Heart right ventricle (tissue), 16 donors: ENCODE measurements at regions of chr2 and their contacts with region 1.

Region 1: DNA sequence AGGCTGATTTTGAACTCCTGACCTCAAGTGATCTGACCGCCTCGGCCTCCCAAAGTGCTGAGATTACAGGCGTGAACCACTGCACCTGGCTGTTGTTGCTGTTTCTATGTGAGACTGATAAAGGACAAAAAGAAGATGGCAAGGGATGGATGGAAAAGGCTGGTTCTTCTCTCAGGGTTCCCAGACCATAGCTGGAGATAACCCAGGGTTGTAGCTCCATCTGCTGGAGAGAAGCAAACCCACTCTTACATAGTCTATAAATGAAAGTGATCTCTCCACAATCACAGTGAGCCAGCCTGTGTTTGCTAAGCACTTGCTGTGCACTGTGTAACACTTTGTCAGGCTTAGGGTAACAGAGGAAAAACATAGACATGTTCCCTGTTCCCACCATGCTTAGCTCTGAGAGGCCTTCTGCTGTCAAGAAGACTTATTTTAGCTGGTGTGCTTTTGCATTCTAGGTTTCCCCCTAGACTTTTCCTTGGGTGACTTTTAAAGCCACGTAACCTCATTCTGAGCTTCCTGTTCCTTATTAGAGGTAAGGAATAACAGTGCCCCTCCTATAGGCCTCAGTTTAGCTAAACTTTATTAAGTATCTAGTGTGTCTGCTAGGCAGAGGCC is 49.7 kb downstream of the LIMS1 start:
- DNase-seq: peak in 1 of 2 donors; percentile 85
- ATAC-seq: peak; percentile 71 to 81 (median 76)
- H3K4me3 ChIP-seq: no peak overlapping the region
- H3K27ac ChIP-seq: peak overlapping the region in 3 of 10 donors; percentile 29 to 52 (median 29)
- H3K4me1 ChIP-seq: peaks cover 13 to 76% (median 55%) of the 10 kb centered on the region in 9 donors
- H3K27me3 ChIP-seq: no peaks in the 10 kb centered on the region
- CTCF ChIP-seq: peak; percentile 53 to 88 (median 84)

Region 2: DNA sequence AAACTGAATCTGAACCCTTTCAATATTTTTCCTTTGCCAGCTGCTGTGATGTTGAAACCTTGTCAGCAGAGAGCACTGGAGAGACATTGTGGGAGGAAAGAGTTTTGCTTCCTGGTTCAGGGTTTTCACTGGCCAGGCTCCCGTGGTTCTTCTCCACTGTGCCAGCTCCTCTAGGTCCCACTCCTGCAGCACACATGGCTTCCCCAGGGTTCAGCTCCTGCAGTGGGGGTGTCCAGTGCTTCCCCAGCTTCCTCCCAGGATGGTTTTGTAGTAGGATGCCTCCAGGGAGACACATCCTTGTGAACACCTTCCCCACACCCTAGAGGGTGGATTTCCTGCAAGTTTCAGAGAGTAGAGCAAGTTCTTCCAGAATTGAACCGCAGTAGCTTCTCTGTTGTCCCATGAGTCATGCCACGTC is 368.2 kb before region 1 on chr2:
- intact Hi-C with region 1: loop called in 3 of 10 experiments (anchors 2 to 10 kb)
- DNase-seq: no peak
- ATAC-seq: peak in 4 of 8 donors; percentile 34 to 75 (median 61)
- H3K4me3 ChIP-seq: no peak overlapping the region
- H3K27ac ChIP-seq: no peak overlapping the region
- H3K4me1 ChIP-seq: peaks cover 0 to 7% (median 0%) of the 10 kb centered on the region in 9 donors
- H3K27me3 ChIP-seq: no peaks in the 10 kb centered on the region
- CTCF ChIP-seq: peak in 5 of 9 donors; percentile 27 to 46 (median 37)

Region 3: GRCh38 chr2:108351889-108352288 is 232.1 kb before region 1 on chr2:
- intact Hi-C with region 1: loop called in 8 of 10 experiments (anchors 2 to 10 kb)
- DNase-seq: no peak
- ATAC-seq: no peak
- H3K4me3 ChIP-seq: no peak overlapping the region
- H3K27ac ChIP-seq: no peak overlapping the region
- H3K4me1 ChIP-seq: no peaks in the 10 kb centered on the region
- H3K27me3 ChIP-seq: peaks cover 0 to 13% (median 0%) of the 10 kb centered on the region in 7 donors
- CTCF ChIP-seq: no peak

Region 4: DNA sequence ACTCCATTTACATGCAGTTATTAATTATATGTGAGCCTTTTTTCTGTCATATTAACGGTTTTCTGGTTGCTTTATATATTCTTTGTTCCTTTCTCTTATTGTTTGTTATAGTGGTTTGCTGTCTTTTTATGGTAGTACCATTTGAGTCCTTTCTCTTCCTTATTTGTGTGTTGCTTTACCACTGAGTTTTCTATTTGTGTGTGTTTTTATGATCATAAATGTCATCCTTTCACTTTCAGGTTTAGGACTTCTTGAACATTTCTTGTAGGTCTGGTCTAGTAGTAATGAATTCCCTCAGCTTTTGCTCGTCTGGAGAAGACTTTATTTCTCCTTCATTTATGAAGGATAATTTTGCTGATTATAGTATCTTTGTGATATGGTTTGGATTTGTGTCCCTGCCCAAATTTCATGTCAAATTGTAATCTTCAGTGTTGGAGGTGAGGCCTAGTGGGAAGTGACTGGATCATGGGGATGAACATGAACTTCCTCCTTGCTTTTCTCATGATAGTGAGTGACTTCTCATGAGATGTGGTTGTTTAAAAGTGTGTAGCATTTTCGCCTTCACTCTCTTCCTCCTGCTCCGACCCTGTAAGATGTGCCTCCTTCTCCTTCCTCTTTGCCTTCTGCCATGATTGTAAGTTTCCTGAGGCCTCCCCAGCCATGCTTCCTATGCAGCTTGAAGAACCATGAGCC is 123.5 kb before region 1 on chr2:
- intact Hi-C with region 1: loop called in 3 of 10 experiments (anchors 10 kb)
- DNase-seq: no peak
- ATAC-seq: no peak
- H3K4me3 ChIP-seq: no peak overlapping the region
- H3K27ac ChIP-seq: no peak overlapping the region
- H3K4me1 ChIP-seq: peaks cover 0 to 5% (median 0%) of the 10 kb centered on the region in 9 donors
- H3K27me3 ChIP-seq: no peaks in the 10 kb centered on the region
- CTCF ChIP-seq: no peak

Region 5: GRCh38 chr2:108533832-108534583 is 50.0 kb before region 1 on chr2 and contains the start of gene LIMS1:
- intact Hi-C with region 1: loop called in 7 of 10 experiments (anchors 2 to 10 kb)
- DNase-seq: peak; percentile 93 to 95
- ATAC-seq: peak; percentile 96 to 99 (median 97)
- H3K4me3 ChIP-seq: peak within 1 kb of the TSS; percentile 62 to 87 (median 76)
- H3K27ac ChIP-seq: peak within 1 kb of the TSS; percentile 73 to 96 (median 89)
- H3K4me1 ChIP-seq: peaks cover 4 to 31% (median 26%) of the 10 kb centered on the region in 9 donors
- H3K27me3 ChIP-seq: no peaks in the 10 kb centered on the region
- CTCF ChIP-seq: peak in 1 of 9 donors; percentile 28
- total RNA-seq, gene LIMS1: 69.7 to 122 (median 78.9) TPM